RWPE1 (cell line): ENCODE measurements at regions of chr11 and their contacts with region 1.

Region 1: DNA sequence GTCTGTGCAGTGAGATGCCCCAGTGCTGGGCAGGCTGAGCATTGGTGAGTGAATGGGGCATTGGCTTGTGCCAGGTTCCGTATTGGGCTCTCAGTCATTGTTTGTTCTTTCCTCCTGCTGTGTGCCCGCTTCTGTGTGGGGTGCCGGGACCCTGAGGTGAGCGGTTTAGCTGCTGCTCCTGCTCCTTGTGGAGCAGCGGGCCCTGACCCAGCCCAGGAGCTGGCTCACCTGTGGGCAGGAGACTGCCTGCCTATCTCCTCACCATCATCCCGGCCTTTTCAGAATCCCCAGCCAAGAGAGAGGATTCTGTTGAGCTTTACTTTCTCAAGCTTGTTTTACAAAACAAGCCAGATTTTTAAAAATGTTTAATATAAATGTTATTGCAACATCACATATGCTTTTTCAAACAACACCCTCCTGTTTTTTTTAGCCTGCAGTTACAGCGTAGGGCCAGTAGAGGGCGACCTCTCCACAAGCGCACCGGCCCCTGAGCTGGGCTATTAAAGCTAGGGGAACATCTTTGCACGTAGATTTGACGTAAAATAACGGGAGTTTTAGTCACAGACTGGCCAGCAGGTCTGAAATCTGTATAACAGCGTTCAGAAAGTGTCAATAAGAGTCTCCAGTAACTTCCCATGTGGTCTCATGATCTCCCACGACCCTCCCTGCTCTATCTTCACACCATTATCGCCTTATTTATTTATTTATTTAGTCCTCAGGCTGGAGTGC is 25.1 kb upstream of the RELT start:
- DNase-seq: peak; percentile 84
- H3K27ac ChIP-seq: peak overlapping the region; percentile 38
- CTCF ChIP-seq: peak; percentile 98

Region 2: DNA sequence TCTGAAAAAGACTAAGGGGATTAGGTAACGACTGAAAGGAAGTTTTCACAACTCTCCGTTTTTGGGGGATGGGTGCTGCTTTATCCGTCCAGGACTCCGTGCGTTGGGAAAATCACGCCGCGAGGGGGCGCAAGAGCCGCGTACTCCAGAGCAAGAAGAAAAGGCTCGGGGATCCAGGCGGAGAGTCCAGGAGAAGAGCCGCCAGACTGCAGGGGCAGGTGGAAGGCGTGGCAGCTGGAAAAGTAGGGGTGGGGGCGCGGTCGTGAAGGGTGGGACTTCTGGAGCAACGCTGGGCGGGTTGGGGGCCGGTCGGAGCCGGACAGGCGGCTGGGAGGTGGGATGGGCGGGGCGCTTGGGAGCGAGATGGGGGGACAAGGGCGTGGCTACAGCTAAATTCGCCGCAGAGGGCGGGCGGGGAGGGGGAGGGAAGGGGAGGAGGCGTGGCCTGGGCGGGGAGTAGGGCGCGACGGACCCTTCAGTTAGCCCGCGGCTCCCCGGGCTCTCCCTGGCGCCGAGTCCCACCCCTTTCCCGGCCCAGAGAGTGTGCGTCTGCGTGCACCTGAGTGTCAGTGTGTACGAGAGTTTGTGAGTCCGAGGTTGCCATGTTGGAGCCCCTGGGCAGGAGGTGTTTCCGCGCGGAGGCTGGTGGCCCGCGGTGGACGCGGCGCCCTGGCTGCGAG is 43.6 kb before region 1 on chr11:
- CTCF ChIA-PET with region 1: interaction called, 12 read pairs
- POLR2A ChIA-PET with region 1: no interaction called
- DNase-seq: peak; percentile 98
- H3K27ac ChIP-seq: peak overlapping the region; percentile 98
- CTCF ChIP-seq: peak; percentile 84

Region 3: DNA sequence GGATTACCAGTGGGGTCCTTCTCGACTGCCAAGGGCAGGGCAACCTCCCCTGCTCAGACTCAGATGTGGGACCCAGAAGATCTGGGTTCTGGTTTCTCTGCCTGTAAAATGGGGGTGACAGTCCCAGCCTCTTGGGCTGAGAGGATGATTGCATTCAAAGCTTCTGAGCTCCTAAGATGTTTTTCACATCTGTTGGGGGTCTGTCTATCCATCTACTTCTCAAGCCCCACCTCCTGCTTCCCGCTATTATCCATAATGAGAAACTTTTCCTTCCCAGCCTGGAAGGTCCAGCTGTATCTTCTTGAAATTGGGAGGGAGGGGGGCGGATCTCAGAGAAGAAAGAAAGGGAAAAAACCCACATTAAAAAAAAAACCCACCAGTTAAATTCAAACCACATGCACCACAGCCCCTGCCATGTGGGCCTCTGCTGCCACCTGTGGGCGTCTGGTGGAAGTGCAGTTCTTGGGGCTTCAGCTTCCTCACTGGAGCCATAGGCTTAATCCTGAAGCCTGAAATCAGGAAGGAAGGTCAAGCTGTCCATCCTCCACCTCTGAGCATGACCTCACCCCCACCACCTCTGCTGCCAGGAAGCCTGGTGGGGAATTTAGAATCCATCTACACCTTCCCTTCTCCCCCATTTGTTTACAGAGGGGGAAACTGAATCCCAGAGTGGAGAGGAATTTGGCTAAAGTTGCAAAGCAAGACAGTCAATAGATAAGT is 15.7 kb before region 1 on chr11:
- CTCF ChIA-PET with region 1: interaction called, 22 read pairs
- POLR2A ChIA-PET with region 1: no interaction called
- DNase-seq: peak; percentile 85
- H3K27ac ChIP-seq: peak overlapping the region; percentile 73
- CTCF ChIP-seq: peak; percentile 98

Region 4: DNA sequence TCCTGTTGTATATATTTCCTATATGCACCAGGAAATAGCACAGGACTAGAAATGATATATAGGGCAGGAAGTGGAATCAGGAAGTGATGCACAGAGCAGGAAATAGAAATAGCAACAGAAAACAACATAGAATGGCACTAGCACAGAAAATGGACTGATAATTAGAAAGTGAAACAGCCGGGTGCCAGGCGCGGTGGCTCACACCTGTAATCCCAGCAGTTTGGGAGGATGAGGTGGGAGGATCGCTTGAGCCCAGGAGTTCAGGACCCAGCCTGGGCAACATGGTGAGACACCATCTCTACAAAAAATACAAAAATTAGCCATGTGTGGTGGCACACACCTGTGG is 15.2 kb after region 1 on chr11:
- CTCF ChIA-PET with region 1: interaction called, 15 read pairs
- POLR2A ChIA-PET with region 1: no interaction called
- DNase-seq: no peak
- H3K27ac ChIP-seq: no peak overlapping the region
- CTCF ChIP-seq: no peak

Region 5: GRCh38 chr11:73372371-73372993 is 21.4 kb after region 1 on chr11:
- CTCF ChIA-PET with region 1: interaction called, 11 read pairs
- POLR2A ChIA-PET with region 1: no interaction called
- DNase-seq: no peak
- H3K27ac ChIP-seq: no peak overlapping the region
- CTCF ChIP-seq: no peak

Region 6: GRCh38 chr11:73393479-73394380 is 42.7 kb after region 1 on chr11:
- CTCF ChIA-PET with region 1: interaction called, 25 read pairs
- POLR2A ChIA-PET with region 1: no interaction called
- DNase-seq: peak; percentile 67
- H3K27ac ChIP-seq: peak overlapping the region; percentile 93
- CTCF ChIP-seq: peak; percentile 76

Region 7: DNA sequence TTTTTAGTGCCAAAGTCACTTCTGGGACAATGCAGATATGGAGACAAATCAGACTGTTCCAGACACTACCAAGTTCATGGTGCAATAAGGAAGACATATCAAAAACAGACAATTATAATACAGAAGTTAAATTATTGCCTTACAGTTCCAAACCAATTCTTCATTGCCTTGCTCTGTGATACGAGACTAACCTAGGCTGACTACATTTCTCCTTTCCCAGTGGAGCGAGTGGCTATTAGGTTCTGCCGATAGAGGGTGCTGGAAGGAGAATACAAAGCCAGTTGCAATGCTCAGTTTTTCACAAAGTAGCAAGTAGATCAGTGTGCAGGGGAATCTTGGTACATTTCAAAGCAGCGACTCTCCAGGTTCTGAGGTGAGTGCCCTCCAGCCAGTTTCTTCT is 179.0 kb after region 1 on chr11:
- CTCF ChIA-PET with region 1: no interaction called
- POLR2A ChIA-PET with region 1: no interaction called
- DNase-seq: no peak
- H3K27ac ChIP-seq: no peak overlapping the region
- CTCF ChIP-seq: no peak

Region 8: GRCh38 chr11:73760679-73761402 is 409.8 kb after region 1 on chr11 and contains the start of gene RAB6A:
- CTCF ChIA-PET with region 1: no interaction called
- POLR2A ChIA-PET with region 1: no interaction called
- DNase-seq: peak; percentile 97
- H3K27ac ChIP-seq: peak within 1 kb of the TSS; percentile 96
- CTCF ChIP-seq: peak; percentile 26